MCF 10A (cell line): ENCODE measurements at regions of chr4 and their contacts with region 1.

Region 1: DNA sequence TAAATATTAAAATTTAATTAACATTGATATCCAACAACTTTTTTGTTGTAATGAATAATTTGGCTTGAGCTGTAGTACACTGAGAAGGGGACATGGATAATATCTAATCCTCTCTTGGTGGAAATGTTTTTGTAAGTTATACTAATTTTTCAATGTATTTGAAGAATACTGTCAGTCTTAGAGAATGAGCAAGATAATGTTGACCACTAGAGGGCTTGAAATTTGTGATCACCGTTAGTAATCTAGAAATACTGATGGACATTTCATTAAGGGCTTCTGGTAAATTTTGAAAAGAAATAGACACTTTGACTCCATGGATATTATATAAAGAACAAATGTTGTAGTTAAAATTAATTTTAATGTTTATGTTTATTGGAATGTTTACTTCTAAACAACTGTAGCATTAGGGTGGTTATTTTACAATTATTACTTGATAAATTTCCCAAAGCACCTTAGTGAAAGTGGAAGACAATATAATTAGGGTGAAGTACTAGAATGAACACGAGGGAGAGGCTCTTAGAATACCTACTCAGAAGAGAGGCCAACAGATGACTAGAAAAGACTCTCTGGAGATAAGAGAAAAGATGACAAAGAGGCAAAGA is 20.0 kb upstream of the CAMK2D start:
- DNase-seq: peak; percentile 53
- H3K4me3 Mint-ChIP-seq: no peak overlapping the region
- H3K27ac Mint-ChIP-seq: no peak overlapping the region
- H3K4me1 Mint-ChIP-seq: peaks cover 20% of the 10 kb centered on the region
- H3K27me3 Mint-ChIP-seq: no peaks in the 10 kb centered on the region
- CTCF ChIP-seq: peak; percentile 38

Region 2: GRCh38 chr4:113539408-113539807 is 242.1 kb before region 1 on chr4:
- CTCF ChIA-PET with region 1: no interaction called
- POLR2A ChIA-PET with region 1: no interaction called
- intact Hi-C with region 1: no loop called
- DNase-seq: no peak
- H3K4me3 Mint-ChIP-seq: no peak overlapping the region
- H3K27ac Mint-ChIP-seq: no peak overlapping the region
- H3K4me1 Mint-ChIP-seq: peaks cover 21% of the 10 kb centered on the region
- H3K27me3 Mint-ChIP-seq: no peaks in the 10 kb centered on the region
- CTCF ChIP-seq: no peak

Region 3: DNA sequence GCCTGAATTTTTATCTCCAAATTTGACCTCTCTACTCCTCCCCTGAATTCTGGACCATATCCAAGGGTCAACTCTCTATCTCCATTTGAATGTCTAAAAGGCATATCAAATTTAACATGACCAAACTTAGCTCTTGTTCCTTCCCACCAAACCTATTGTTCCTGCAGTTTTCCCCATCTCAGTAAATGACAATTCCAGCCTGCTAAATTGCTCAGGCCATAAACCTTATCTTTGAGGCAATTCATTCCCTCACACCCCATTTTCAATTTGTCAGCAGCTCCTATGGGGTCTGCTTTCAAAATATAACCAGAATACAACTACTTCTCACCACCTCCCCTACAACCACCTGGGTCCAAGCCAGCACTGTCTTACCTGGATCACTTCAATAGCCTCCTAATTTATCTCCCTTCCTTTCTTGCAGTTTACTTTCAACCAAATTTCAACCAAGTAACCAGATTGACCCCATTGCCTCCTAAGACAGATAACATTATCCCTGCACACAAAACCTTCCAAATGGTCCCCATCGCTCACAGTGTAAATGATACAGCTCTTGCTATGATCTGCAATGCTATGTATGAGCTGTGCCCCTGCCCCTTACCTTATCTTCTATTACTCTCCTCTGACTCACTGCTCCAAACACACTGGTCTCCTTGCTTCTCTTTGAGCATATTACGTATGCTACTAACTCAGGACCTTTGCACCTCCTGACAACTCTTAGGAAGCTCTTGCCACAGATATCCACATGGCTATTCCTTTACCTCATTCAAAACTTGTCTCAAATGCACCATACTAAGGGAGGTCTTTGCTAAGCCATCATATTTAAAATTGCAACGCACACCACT is 86.0 kb before region 1 on chr4:
- CTCF ChIA-PET with region 1: no interaction called
- POLR2A ChIA-PET with region 1: no interaction called
- intact Hi-C with region 1: no loop called
- DNase-seq: no peak
- H3K4me3 Mint-ChIP-seq: no peak overlapping the region
- H3K27ac Mint-ChIP-seq: no peak overlapping the region
- H3K4me1 Mint-ChIP-seq: no peaks in the 10 kb centered on the region
- H3K27me3 Mint-ChIP-seq: no peaks in the 10 kb centered on the region
- CTCF ChIP-seq: no peak

Region 4: DNA sequence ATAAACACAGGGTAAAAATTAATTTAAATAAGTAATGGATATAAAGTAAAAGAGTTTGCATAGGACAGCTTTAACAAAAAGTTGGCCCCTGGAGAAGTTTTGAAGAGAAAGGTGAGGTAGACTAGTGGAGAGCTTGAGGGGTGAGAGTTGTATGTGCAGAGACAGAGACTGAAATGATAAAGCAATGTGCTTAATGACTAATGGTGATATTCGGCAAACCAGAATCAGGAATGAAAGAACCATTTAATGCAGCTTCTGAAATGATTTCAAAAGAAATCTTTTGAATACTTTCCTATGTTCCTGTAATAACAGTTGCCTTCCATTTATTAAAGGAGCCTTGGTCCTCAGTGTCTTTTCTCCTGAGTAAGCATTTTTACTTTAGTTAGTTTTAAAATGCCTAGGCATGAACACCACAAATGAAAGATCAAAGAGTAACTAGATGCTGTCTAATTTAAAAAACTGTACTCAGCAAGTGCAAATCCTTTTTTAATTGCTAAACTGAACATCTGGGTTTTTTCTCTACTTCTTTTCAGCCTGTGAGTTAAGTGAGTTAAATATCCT is 48.5 kb before region 1 on chr4:
- CTCF ChIA-PET with region 1: no interaction called
- POLR2A ChIA-PET with region 1: no interaction called
- intact Hi-C with region 1: no loop called
- DNase-seq: no peak
- H3K4me3 Mint-ChIP-seq: no peak overlapping the region
- H3K27ac Mint-ChIP-seq: no peak overlapping the region
- H3K4me1 Mint-ChIP-seq: peaks cover 23% of the 10 kb centered on the region
- H3K27me3 Mint-ChIP-seq: no peaks in the 10 kb centered on the region
- CTCF ChIP-seq: no peak

Region 5: GRCh38 chr4:113893546-113893945 is 112.0 kb after region 1 on chr4:
- CTCF ChIA-PET with region 1: no interaction called
- POLR2A ChIA-PET with region 1: interaction called, 3 read pairs
- intact Hi-C with region 1: loop called (anchors 5 kb)
- DNase-seq: peak; percentile 36
- H3K4me3 Mint-ChIP-seq: no peak overlapping the region
- H3K27ac Mint-ChIP-seq: no peak overlapping the region
- H3K4me1 Mint-ChIP-seq: no peaks in the 10 kb centered on the region
- H3K27me3 Mint-ChIP-seq: no peaks in the 10 kb centered on the region
- CTCF ChIP-seq: peak; percentile 24

Region 6: DNA sequence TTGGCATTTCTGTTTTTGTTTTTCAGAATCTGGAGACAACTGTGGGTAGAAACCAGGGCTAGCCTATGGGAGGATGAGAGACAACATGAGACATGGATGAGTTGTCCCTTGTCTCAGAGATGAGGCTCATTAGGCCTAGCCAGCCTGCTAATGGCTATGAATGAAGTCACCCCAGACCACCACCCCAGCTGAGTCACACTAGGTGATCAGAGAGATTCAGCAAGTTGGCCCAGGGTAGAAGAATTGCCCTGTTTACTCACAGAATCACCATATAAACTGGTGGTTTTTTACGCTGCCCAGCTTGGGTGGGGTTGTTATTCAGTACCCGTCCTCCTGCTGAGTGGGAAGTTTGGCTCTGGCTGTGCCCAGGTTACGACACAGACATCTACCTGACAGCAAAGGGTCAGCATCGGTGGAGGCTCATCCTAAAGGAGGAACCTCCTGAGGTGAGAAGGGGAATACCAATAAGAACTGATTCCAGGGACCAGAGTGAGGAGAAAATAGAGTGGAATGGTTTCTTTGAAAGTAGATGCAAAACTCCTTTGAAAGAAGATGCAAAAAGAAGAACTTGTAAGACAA is 215.1 kb after region 1 on chr4:
- CTCF ChIA-PET with region 1: no interaction called
- POLR2A ChIA-PET with region 1: no interaction called
- intact Hi-C with region 1: no loop called
- DNase-seq: no peak
- H3K4me3 Mint-ChIP-seq: no peak overlapping the region
- H3K27ac Mint-ChIP-seq: peak overlapping the region; percentile 63
- H3K4me1 Mint-ChIP-seq: peaks cover 26% of the 10 kb centered on the region
- H3K27me3 Mint-ChIP-seq: no peaks in the 10 kb centered on the region
- CTCF ChIP-seq: no peak

Region 7: DNA sequence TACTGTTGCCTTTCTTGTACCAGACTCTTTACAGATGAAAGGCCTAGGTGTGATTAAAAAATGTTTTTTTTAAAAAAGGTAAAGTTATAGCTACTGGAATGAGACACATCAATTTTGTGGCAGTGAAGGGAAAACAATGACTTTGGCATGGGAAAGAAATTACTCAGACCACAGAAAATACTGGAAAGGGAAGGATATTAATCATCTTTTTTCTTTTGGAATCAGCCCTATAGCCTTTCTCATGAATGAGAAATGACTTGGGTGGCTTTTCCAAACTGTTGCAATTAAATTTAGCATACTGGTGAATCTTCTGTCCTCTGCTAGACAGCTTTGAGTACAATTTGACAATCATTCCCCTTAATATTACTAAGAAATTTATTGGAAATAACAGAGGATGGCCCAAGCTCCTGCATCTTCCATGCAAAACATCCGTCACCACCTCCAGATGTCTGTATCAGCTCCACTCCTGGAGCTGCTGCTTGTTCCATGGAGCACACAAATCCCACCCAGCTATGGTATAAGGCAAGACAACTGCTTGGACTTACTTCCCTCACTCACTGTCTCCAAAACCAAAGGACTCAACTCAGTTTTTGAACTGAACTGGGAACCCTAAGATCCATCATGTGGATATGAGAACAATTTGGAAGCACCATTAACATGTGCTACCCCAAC is 295.5 kb after region 1 on chr4:
- CTCF ChIA-PET with region 1: interaction called, 16 read pairs
- POLR2A ChIA-PET with region 1: no interaction called
- intact Hi-C with region 1: no loop called
- DNase-seq: peak; percentile 22
- H3K4me3 Mint-ChIP-seq: no peak overlapping the region
- H3K27ac Mint-ChIP-seq: peak overlapping the region; percentile 23
- H3K4me1 Mint-ChIP-seq: peaks cover 9% of the 10 kb centered on the region
- H3K27me3 Mint-ChIP-seq: no peaks in the 10 kb centered on the region
- CTCF ChIP-seq: no peak